ENCODE measurements at regions of chr20 and their contacts with region 1.

Region 1: GRCh38 chr20:44609511-44610312 is 27.3 kb downstream of the PKIG start:
- DNase-seq: peak; percentile 93 to 95
- H3K4me3 ChIP-seq: no peak overlapping the region
- H3K4me1 ChIP-seq: peaks cover 3% of the 10 kb centered on the region
- H3K27me3 ChIP-seq: no peaks in the 10 kb centered on the region

Region 2: DNA sequence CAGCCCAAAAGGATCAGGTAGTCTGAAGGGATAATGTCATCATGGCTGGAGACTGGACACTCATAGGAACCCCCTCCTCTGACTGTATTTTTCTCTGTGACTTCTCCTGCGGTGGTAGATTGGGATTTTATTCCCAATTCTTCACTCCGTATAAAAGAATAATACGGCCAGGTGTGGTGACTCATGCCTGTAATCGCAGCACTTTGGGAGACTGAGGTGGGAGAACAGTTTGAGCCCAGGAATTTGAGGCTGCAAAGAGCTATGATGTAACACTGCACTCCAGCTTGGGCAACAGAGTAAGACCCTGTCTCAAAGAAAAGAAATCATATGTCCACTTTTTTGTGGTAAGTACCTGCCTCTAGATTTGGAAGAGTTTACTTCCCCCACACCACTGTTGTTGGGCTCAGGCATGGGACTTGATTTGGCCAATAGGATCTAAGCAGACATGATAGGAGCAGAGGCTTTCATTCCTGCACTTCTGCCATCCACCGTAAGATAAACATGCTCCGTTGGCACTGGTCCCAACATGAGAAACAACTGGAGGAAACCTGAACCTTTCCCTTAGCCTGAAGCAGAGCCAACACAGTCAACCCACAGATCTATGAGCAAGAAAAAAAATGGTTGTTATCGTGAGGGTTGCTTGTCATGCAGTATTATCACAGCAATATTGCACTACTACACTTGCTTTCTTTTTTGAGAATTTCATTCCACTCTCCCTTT is 504.8 kb before region 1 on chr20:
- in situ Hi-C with region 1: loop called (anchors 25 kb)
- DNase-seq: no peak
- H3K4me3 ChIP-seq: no peak overlapping the region
- H3K4me1 ChIP-seq: no peaks in the 10 kb centered on the region
- H3K27me3 ChIP-seq: peaks cover 2% of the 10 kb centered on the region; the same call in 1 of the 2 replicates